Activated CD8-positive, alpha-beta T cell treated with anti-CD3 and anti-CD28 coated beads, Interleukin-2, amount 10 ng/mL, durations not matched to agents 7 days and 5 days (primary cell): ENCODE measurements at regions of chr17 and their contacts with region 1.

Region 1: GRCh38 chr17:64291254-64291851 is 28.3 kb upstream of the TEX2 start:
- DNase-seq: peak; percentile 29
- ATAC-seq: no peak
- H3K4me3 Mint-ChIP-seq: no peak overlapping the region
- H3K27ac Mint-ChIP-seq: no peak overlapping the region
- H3K4me1 Mint-ChIP-seq: no peaks in the 10 kb centered on the region
- H3K27me3 Mint-ChIP-seq: peaks cover 3% of the 10 kb centered on the region

Region 2: DNA sequence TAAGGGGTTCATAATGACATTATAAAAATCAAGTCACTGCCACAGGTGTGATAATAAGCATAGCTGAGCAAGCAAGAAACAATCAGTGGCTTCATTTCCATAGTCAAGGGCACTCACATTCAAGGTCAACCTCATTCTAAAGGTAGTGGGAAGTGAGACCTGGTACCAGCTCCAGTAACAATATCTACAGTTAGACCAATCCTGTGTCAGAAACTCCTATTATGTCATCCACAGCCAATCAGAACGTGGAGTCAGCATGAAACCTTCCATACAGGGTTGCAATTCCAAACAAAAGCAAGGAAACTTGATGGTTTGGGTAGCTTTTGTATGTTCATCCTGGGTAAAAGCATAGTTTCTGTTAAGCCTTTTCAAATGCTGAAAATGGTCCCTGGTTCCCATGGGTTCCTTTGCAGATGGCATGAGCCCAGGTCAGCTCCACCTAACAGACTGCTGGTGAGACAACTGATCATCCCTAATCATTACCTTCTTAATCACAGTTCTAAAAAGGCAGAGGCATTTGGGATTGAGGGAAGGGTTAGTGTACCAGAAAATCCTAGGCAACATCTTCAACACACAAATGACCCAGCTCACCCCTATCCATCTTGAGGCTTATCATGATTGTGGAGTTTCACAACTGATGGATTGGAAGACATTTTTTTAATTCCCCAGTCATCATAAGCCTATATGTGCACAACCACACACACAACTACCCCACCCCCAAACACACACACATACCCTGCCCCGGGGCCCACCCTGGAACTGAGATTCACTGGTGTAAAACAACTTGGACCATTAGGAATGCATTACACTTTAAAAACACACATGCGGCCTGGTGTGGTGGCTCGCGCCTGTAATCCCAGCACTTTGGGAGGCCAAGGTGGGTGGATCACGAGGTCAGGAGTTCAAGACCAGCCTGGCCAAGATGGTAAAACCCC is 58.6 kb before region 1 on chr17:
- CTCF ChIA-PET with region 1: no interaction called
- POLR2A ChIA-PET with region 1: no interaction called
- DNase-seq: no peak
- ATAC-seq: no peak
- H3K4me3 Mint-ChIP-seq: no peak overlapping the region
- H3K27ac Mint-ChIP-seq: no peak overlapping the region
- H3K4me1 Mint-ChIP-seq: no peaks in the 10 kb centered on the region
- H3K27me3 Mint-ChIP-seq: no peaks in the 10 kb centered on the region

Region 3: DNA sequence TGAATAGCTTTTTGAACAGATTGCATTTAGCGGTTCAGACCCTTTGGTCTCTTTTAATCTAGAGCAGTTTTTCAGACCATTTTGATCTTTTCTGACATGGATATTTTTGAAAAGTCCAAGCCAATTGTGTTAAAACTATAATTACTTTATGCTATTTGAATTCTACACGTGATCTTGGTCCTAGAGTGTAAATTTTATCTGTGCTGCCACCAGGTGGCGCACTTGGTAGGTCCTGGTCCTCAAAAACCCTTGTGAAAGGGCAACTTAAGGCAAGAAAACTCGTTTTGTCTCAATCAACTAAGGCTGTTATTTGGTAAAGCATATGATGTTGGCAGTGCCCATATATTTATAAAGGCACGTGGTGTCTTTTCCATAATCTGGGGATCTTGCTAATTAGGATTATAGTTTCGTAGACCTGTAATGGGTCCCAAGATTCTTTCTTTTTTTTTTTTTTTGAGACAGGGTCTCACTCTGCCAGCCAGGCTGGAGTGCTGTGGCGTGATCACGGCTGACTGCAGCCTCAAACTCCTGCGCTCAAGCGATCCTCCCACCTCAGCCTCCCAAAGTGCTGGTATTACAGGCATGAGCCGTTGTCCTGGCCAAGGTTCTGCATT is 15.6 kb after region 1 on chr17:
- CTCF ChIA-PET with region 1: interaction called, 10 read pairs
- POLR2A ChIA-PET with region 1: no interaction called
- DNase-seq: peak; percentile 81
- ATAC-seq: peak; percentile 87
- H3K4me3 Mint-ChIP-seq: no peak overlapping the region
- H3K27ac Mint-ChIP-seq: no peak overlapping the region
- H3K4me1 Mint-ChIP-seq: no peaks in the 10 kb centered on the region
- H3K27me3 Mint-ChIP-seq: no peaks in the 10 kb centered on the region